A549 (cell line): ENCODE measurements at regions of chr5 and their contacts with region 1.

Region 1: DNA sequence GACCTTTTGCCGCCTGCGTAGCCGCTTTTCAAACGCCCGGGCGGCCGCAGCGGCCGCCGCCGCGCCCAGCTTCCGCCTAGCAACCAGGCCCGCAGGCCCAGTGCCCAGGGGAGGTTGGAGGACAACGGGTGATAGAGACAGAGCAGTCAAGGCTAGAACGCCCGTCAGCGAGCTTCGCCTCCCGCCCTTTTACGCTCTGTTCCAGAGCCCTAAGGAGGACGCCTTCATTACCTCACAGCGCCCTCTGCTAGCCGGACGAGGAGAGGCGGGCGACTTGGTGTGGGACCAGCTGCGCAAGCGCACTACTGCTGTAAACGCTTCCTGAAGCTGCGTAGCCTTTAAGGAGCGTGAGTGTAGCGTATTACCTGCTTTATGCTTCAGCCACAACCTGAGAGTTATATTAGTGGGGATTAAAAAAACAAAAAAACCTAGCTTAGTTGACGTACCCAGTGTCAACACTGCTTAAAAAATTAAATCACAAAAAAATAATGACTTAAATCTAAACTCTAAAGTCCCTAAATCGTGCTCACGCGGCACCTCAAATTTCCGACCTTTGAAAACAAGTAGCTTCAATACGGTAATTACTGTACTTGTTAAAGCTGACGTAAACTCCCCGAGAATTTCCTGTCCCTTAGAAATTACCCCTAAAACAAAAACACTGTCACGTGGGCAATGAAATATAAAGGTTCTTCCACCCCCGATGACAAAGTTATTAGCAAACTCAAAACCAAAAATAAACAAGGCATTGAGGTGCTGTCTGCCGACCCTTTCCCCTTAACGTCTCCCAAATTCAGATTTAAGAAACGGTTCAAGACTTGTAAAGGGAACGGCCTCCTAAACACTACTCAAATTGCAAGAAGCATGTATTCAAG is at the start of gene CEP120:
- DNase-seq: peak; percentile 98 to 99
- ATAC-seq: peak; percentile 99 to 100
- H3K4me3 ChIP-seq: peak within 1 kb of the TSS; percentile 73
- H3K27ac ChIP-seq: peak within 1 kb of the TSS; percentile 87 to 96
- H3K4me1 ChIP-seq: peaks cover 18% of the 10 kb centered on the region; the same call in 2 of the 3 replicates
- CTCF ChIP-seq: peak; percentile 78
- EP300 ChIP-seq: no peak
- POLR2A ChIP-seq: peak; percentile 80
- RAD21 ChIP-seq: peak; percentile 45 to 59
- polyA plus RNA-seq, gene CEP120: 40.8 and 48.6 TPM in 2 replicates

Region 2: GRCh38 chr5:123433596-123433995 is 10.1 kb after region 1 on chr5:
- CTCF ChIA-PET with region 1: interaction called, 10 read pairs
- POLR2A ChIA-PET with region 1: interaction called, 5 read pairs
- DNase-seq: no peak
- ATAC-seq: no peak
- H3K4me3 ChIP-seq: no peak overlapping the region
- H3K27ac ChIP-seq: no peak overlapping the region
- H3K4me1 ChIP-seq: peaks cover 11% of the 10 kb centered on the region
- CTCF ChIP-seq: no peak
- EP300 ChIP-seq: no peak
- POLR2A ChIP-seq: no peak
- RAD21 ChIP-seq: no peak

Region 3: GRCh38 chr5:123511648-123512605 is 88.4 kb after region 1 on chr5 and contains the start of gene CSNK1G3:
- CTCF ChIA-PET with region 1: interaction called, 14 read pairs
- POLR2A ChIA-PET with region 1: interaction called, 125 read pairs
- DNase-seq: peak; percentile 94 to 97
- ATAC-seq: peak; percentile 94 to 98
- H3K4me3 ChIP-seq: peak within 1 kb of the TSS; percentile 93
- H3K27ac ChIP-seq: peak within 1 kb of the TSS; percentile 96 to 97
- H3K4me1 ChIP-seq: peaks cover 24% of the 10 kb centered on the region
- CTCF ChIP-seq: no peak
- EP300 ChIP-seq: no peak
- POLR2A ChIP-seq: peak; percentile 92
- RAD21 ChIP-seq: no peak
- polyA plus RNA-seq, gene CSNK1G3: 36.4 and 50.9 TPM in 2 replicates

Region 4: DNA sequence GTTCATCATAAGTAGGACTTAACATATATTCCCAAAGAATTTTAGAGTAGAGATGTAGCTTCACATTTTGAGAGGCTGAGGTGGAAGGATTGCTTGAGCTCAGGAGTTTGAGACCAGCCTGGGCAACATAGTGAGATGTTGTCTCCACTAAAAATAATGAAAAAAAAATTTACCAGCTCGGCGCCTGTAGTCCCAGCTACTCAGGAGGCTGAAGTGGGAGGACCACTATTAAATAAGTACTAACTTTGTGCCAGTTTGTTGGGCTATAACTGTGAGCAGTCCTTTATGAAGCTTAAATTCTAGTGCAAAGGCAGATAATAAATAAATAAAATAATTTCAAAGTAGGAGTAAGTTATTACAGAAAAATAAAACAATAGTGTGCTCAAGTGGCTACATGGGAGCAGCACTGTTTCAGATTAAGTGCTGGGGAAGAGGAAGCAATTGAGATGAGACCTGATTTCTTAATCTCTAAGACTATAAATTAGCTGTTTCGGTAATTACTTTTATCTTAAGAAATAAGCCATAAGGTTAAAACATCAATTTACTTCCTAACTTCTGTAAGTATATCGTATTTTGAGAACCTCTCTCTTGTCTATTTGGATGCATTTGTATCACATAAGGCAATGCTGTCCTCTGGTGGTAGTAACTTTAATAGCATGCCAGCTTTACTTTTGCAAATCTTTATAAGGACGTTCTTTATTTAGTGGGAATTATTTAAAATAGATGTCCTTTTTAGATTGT is 187.3 kb after region 1 on chr5:
- CTCF ChIA-PET with region 1: interaction called, 28 read pairs
- POLR2A ChIA-PET with region 1: interaction called, 11 read pairs
- DNase-seq: peak; percentile 15 to 68
- ATAC-seq: peak; percentile 64 to 82; a peak in 4 of 6 replicates
- H3K4me3 ChIP-seq: no peak overlapping the region
- H3K27ac ChIP-seq: no peak overlapping the region
- H3K4me1 ChIP-seq: no peaks in the 10 kb centered on the region
- CTCF ChIP-seq: peak; percentile 96
- EP300 ChIP-seq: no peak
- POLR2A ChIP-seq: no peak
- RAD21 ChIP-seq: peak; percentile 89 to 90